Psoas muscle (tissue), 8 donors: ENCODE measurements at regions of chr9 and their contacts with region 1.

Region 1: GRCh38 chr9:97411789-97412625 is at the start of gene TDRD7:
- DNase-seq: peak; percentile 87 to 94
- ATAC-seq: peak; percentile 92 to 97 (median 96)
- H3K4me3 ChIP-seq: peak within 1 kb of the TSS; percentile 93
- H3K27ac ChIP-seq: peak within 1 kb of the TSS; percentile 70
- H3K4me1 ChIP-seq: no peaks in the 10 kb centered on the region
- H3K27me3 ChIP-seq: peaks cover 0 to 2% (median 0%) of the 10 kb centered on the region in 3 donors
- CTCF ChIP-seq: peak; percentile 97
- total RNA-seq, gene TDRD7: 3.3 to 7.0 (median 5.0) TPM

Region 2: GRCh38 chr9:97386733-97387503 is 25.1 kb before region 1 on chr9:
- intact Hi-C with region 1: loop called in 1 of 2 experiments (anchors 1 kb)
- DNase-seq: peak; percentile 62 to 77
- ATAC-seq: peak; percentile 61 to 76 (median 70)
- H3K4me3 ChIP-seq: no peak overlapping the region
- H3K27ac ChIP-seq: no peak overlapping the region
- H3K4me1 ChIP-seq: no peaks in the 10 kb centered on the region
- H3K27me3 ChIP-seq: peaks cover 0 to 6% (median 4%) of the 10 kb centered on the region in 3 donors
- CTCF ChIP-seq: peak; percentile 94

Region 3: DNA sequence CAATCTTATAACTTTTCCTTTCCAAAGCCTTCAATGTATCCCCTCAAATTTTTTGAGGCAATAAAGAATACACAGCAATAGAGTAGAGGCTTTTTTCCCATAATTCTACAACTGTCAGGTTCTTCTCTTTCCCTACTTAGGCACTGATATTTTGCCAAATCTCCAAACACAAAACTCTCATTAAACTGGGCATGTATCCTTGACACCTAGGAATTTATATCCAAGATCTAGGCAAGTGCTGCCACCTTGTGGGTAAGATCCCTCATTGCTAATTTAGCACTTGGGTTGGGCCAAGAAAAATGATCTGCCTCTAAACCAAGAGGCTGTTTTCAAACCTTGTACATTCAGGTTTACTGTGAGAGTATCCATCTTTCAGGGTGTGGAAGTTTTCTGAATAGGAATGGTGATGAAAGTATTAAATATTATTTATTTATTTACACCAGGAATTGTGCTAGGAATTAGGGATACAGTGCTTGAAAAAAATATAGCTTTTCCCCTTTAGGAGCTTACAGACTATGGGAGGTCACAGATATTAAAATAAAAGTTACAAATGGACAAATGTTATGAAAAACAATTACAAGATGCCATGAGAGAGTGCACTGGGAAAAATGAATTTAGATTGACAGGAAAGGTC is 203.5 kb after region 1 on chr9:
- intact Hi-C with region 1: loop called (anchors 5 to 10 kb)
- DNase-seq: no peak
- ATAC-seq: peak; percentile 67 to 90 (median 78)
- H3K4me3 ChIP-seq: no peak overlapping the region
- H3K27ac ChIP-seq: peak overlapping the region; percentile 18
- H3K4me1 ChIP-seq: peaks cover 14% of the 10 kb centered on the region
- H3K27me3 ChIP-seq: no peaks in the 10 kb centered on the region
- CTCF ChIP-seq: peak; percentile 91

Region 4: GRCh38 chr9:97910357-97910756 is 498.4 kb after region 1 on chr9:
- intact Hi-C with region 1: loop called in 1 of 2 experiments (anchors 10 kb)
- DNase-seq: no peak
- ATAC-seq: no peak
- H3K4me3 ChIP-seq: no peak overlapping the region
- H3K27ac ChIP-seq: no peak overlapping the region
- H3K4me1 ChIP-seq: peaks cover 9% of the 10 kb centered on the region
- H3K27me3 ChIP-seq: no peaks in the 10 kb centered on the region
- CTCF ChIP-seq: no peak